ENCODE measurements at regions of chr2 and their contacts with region 1.

Region 1: GRCh38 chr2:88880441-88880953 is 189.0 kb downstream of the RPIA start:
- H3K4me3 ChIP-seq: peak overlapping the region; percentile 18
- H3K27ac ChIP-seq: no peak overlapping the region
- H3K4me1 ChIP-seq: no peaks in the 10 kb centered on the region
- CTCF ChIP-seq: peak; percentile 63

Region 2: GRCh38 chr2:88753833-88754584 is 126.5 kb before region 1 on chr2:
- CTCF ChIA-PET with region 1: no interaction called
- POLR2A ChIA-PET with region 1: no interaction called
- H3K4me3 ChIP-seq: no peak overlapping the region
- H3K27ac ChIP-seq: no peak overlapping the region
- H3K4me1 ChIP-seq: no peaks in the 10 kb centered on the region
- CTCF ChIP-seq: no peak

Region 3: GRCh38 chr2:88831792-88832248 is 48.7 kb before region 1 on chr2:
- CTCF ChIA-PET with region 1: interaction called, 14 read pairs
- POLR2A ChIA-PET with region 1: no interaction called
- H3K4me3 ChIP-seq: no peak overlapping the region
- H3K27ac ChIP-seq: no peak overlapping the region
- H3K4me1 ChIP-seq: no peaks in the 10 kb centered on the region
- CTCF ChIP-seq: peak; percentile 28

Region 4: DNA sequence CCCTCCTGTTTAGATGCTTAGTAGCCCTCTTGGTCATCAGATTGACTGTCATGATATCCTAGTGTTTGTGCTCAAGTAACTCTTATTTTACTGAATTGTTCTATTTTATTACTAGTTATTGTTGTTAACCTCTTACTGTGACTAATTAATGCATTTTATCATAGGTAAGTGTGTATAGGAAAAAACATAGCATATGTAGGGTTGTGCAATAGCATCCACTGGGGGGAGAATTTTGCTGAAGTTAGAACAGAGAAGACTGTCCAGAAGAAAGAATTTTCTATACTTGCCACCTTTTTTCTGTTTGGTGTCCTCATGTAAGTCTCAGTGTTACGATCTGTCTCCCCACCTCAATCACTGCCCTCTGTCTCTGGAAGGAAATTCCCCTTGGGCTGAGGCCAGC is 11.6 kb before region 1 on chr2:
- CTCF ChIA-PET with region 1: interaction called, 22 read pairs
- POLR2A ChIA-PET with region 1: no interaction called
- H3K4me3 ChIP-seq: no peak overlapping the region
- H3K27ac ChIP-seq: no peak overlapping the region
- H3K4me1 ChIP-seq: no peaks in the 10 kb centered on the region
- CTCF ChIP-seq: no peak

Region 5: DNA sequence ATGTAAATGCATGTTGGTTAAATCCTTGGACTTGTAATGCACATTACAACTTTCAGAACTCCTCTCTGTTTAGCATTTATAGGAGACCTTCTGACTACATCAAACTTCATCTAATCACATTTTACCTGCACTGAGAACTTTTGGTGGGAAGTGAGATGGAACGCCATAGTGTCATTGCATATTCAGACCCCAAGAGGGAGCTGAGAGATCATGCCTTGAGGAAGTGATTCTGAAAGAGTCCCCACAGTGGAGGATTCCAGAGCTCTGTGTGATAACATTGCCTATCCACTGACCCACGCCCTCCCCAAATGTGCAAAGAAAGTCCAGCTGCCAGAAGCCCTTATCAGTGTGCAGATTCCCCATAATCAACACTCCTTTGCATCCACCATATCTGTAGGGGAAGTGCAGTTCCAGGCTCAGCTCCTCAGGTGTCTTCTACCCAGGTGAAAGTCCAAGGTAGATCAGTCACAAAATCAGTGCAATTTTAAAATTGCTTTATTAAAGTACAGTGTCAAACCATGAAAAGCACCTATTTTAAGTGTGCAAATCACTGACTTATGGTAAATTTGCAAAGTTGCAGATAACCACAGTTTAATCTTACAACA is 23.4 kb after region 1 on chr2:
- CTCF ChIA-PET with region 1: interaction called, 11 read pairs
- POLR2A ChIA-PET with region 1: no interaction called
- H3K4me3 ChIP-seq: no peak overlapping the region
- H3K27ac ChIP-seq: no peak overlapping the region
- H3K4me1 ChIP-seq: no peaks in the 10 kb centered on the region
- CTCF ChIP-seq: peak; percentile 63

Region 6: GRCh38 chr2:88950010-88950409 is 69.5 kb after region 1 on chr2:
- CTCF ChIA-PET with region 1: interaction called, 13 read pairs
- POLR2A ChIA-PET with region 1: no interaction called
- H3K4me3 ChIP-seq: no peak overlapping the region
- H3K27ac ChIP-seq: no peak overlapping the region
- H3K4me1 ChIP-seq: no peaks in the 10 kb centered on the region
- CTCF ChIP-seq: no peak

Measured in HEK293 (cell line).